ENCODE measurements at regions of chr3 and their contacts with region 1.

Region 1: GRCh38 chr3:71583566-71584449 is at the start of gene FOXP1:
- DNase-seq: peak; percentile 80
- total RNA-seq, gene FOXP1: 31.8 and 39.5 TPM in 2 replicates

Region 2: DNA sequence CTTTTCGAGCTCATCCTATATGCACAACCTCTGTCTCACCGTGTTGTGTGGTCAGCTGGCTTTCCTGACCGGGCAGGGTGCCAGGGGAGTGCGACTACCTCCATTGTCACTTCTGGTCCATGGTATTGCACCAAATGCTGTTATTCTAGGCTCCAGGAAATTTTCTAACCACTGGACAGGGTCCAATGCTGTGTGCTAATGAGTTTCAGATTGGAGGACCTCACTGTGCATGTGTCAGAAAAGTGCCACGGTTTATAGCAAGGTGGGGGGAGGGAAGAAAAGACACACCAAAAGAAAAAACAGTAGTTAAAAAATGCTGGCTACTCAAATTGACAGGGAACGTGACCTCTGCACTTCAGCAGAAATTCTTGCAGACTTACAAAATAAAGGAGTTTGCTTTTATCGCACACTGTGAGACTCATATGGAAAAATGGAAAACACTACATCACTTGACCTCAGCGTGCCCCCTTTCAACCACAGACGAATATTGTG is 480.3 kb before region 1 on chr3:
- in situ Hi-C with region 1: loop called (anchors 25 kb)
- DNase-seq: peak; percentile 87

Measured in Caki2 (cell line).